IMR-90 (cell line): ENCODE measurements at regions of chr4 and their contacts with region 1.

Region 1: GRCh38 chr4:21469438-21470300 is 478.9 kb downstream of the KCNIP4 start:
- DNase-seq: no peak
- ATAC-seq: no peak
- H3K4me3 ChIP-seq: no peak overlapping the region
- H3K27ac ChIP-seq: no peak overlapping the region
- H3K4me1 ChIP-seq: no peaks in the 10 kb centered on the region
- H3K27me3 ChIP-seq: no peaks in the 10 kb centered on the region
- CTCF ChIP-seq: peak; percentile 43
- POLR2A ChIP-seq: no peak
- RAD21 ChIP-seq: peak; percentile 40

Region 2: GRCh38 chr4:20773144-20773997 is 696.3 kb before region 1 on chr4:
- CTCF ChIA-PET with region 1: interaction called, 3 read pairs
- POLR2A ChIA-PET with region 1: no interaction called
- dilution Hi-C with region 1: no loop called
- in situ Hi-C with region 1: no loop called
- intact Hi-C with region 1: loop called (anchors 1 kb)
- DNase-seq: peak; percentile 54
- ATAC-seq: peak; percentile 96
- H3K4me3 ChIP-seq: no peak overlapping the region
- H3K27ac ChIP-seq: no peak overlapping the region
- H3K4me1 ChIP-seq: no peaks in the 10 kb centered on the region
- H3K27me3 ChIP-seq: no peaks in the 10 kb centered on the region
- CTCF ChIP-seq: peak; percentile 72
- POLR2A ChIP-seq: no peak
- RAD21 ChIP-seq: peak; percentile 66

Region 3: GRCh38 chr4:21410372-21410771 is 59.3 kb before region 1 on chr4:
- CTCF ChIA-PET with region 1: no interaction called
- POLR2A ChIA-PET with region 1: no interaction called
- dilution Hi-C with region 1: no loop called
- in situ Hi-C with region 1: no loop called
- intact Hi-C with region 1: no loop called
- DNase-seq: no peak
- ATAC-seq: no peak
- H3K4me3 ChIP-seq: no peak overlapping the region
- H3K27ac ChIP-seq: no peak overlapping the region
- H3K4me1 ChIP-seq: no peaks in the 10 kb centered on the region
- H3K27me3 ChIP-seq: no peaks in the 10 kb centered on the region
- CTCF ChIP-seq: no peak
- POLR2A ChIP-seq: no peak
- RAD21 ChIP-seq: no peak

Region 4: DNA sequence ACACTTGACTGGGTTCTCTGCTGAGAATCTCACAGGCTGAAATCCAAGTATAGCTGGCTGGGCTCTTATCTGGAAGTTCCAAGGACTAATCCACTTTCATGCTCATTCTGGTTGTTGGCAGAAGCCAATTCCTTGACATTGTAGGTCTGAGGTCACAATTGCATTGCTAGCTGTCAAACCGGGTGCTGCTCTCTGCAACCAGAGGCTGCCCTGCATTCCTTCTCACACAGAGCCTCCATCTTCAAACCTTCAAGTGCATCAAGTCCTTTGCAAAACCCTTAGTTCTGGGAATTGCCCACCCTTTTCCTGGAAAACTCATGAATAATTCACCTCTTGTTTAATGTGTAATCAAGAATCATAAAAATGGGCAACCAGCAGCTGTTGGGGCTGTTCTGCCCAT is 74.7 kb after region 1 on chr4:
- CTCF ChIA-PET with region 1: no interaction called
- POLR2A ChIA-PET with region 1: no interaction called
- dilution Hi-C with region 1: no loop called
- in situ Hi-C with region 1: no loop called
- intact Hi-C with region 1: no loop called
- DNase-seq: no peak
- ATAC-seq: no peak
- H3K4me3 ChIP-seq: no peak overlapping the region
- H3K27ac ChIP-seq: no peak overlapping the region
- H3K4me1 ChIP-seq: no peaks in the 10 kb centered on the region
- H3K27me3 ChIP-seq: no peaks in the 10 kb centered on the region
- CTCF ChIP-seq: no peak
- POLR2A ChIP-seq: no peak
- RAD21 ChIP-seq: no peak